ENCODE measurements at regions of chr5 and their contacts with region 1.

Region 1: GRCh38 chr5:154405078-154405792 is 40.6 kb upstream of the SAP30L start:
- DNase-seq: peak; percentile 82 to 83
- ATAC-seq: peak; percentile 94 to 99 (median 97)
- H3K4me3 ChIP-seq: peak overlapping the region in 9 of 10 donors; percentile 13 to 55 (median 49)
- H3K27ac ChIP-seq: peak overlapping the region in 4 of 10 donors; percentile 19 to 57 (median 24)
- H3K4me1 ChIP-seq: peaks cover 0 to 13% (median 9%) of the 10 kb centered on the region in 9 donors
- H3K27me3 ChIP-seq: no peaks in the 10 kb centered on the region
- CTCF ChIP-seq: peak; percentile 79 to 98 (median 91)

Region 2: GRCh38 chr5:153745778-153746395 is 659.3 kb before region 1 on chr5:
- intact Hi-C with region 1: no loop called
- DNase-seq: no peak
- ATAC-seq: peak in 5 of 8 donors; percentile 27 to 80 (median 52)
- H3K4me3 ChIP-seq: no peak overlapping the region
- H3K27ac ChIP-seq: peak overlapping the region in 1 of 10 donors; percentile 53
- H3K4me1 ChIP-seq: peaks cover 0 to 18% (median 0%) of the 10 kb centered on the region in 9 donors
- H3K27me3 ChIP-seq: no peaks in the 10 kb centered on the region
- CTCF ChIP-seq: no peak

Region 3: GRCh38 chr5:153974131-153974812 is 431.0 kb before region 1 on chr5:
- intact Hi-C with region 1: loop called (anchors 2 to 10 kb)
- DNase-seq: peak in 1 of 2 donors; percentile 36
- ATAC-seq: peak in 7 of 8 donors; percentile 31 to 76 (median 41)
- H3K4me3 ChIP-seq: no peak overlapping the region
- H3K27ac ChIP-seq: no peak overlapping the region
- H3K4me1 ChIP-seq: peaks cover 0 to 5% (median 0%) of the 10 kb centered on the region in 9 donors
- H3K27me3 ChIP-seq: no peaks in the 10 kb centered on the region
- CTCF ChIP-seq: peak; percentile 56 to 82 (median 77)

Region 4: GRCh38 chr5:154072414-154073171 is 332.6 kb before region 1 on chr5:
- intact Hi-C with region 1: loop called (anchors 1 to 5 kb)
- DNase-seq: peak; percentile 82 to 83
- ATAC-seq: peak; percentile 89 to 96 (median 93)
- H3K4me3 ChIP-seq: no peak overlapping the region
- H3K27ac ChIP-seq: peak overlapping the region in 4 of 10 donors; percentile 7 to 41 (median 11)
- H3K4me1 ChIP-seq: peaks cover under 1 to 35% (median 14%) of the 10 kb centered on the region in 9 donors
- H3K27me3 ChIP-seq: no peaks in the 10 kb centered on the region
- CTCF ChIP-seq: peak; percentile 79 to 97 (median 93)

Region 5: GRCh38 chr5:154077696-154078095 is 327.5 kb before region 1 on chr5:
- intact Hi-C with region 1: loop called (anchors 1 to 5 kb)
- DNase-seq: peak in 1 of 2 donors; percentile 26
- ATAC-seq: peak; percentile 46 to 94 (median 84)
- H3K4me3 ChIP-seq: no peak overlapping the region
- H3K27ac ChIP-seq: peak overlapping the region in 1 of 10 donors; percentile 2
- H3K4me1 ChIP-seq: peaks cover 7 to 38% (median 23%) of the 10 kb centered on the region in 9 donors
- H3K27me3 ChIP-seq: no peaks in the 10 kb centered on the region
- CTCF ChIP-seq: no peak

Region 6: DNA sequence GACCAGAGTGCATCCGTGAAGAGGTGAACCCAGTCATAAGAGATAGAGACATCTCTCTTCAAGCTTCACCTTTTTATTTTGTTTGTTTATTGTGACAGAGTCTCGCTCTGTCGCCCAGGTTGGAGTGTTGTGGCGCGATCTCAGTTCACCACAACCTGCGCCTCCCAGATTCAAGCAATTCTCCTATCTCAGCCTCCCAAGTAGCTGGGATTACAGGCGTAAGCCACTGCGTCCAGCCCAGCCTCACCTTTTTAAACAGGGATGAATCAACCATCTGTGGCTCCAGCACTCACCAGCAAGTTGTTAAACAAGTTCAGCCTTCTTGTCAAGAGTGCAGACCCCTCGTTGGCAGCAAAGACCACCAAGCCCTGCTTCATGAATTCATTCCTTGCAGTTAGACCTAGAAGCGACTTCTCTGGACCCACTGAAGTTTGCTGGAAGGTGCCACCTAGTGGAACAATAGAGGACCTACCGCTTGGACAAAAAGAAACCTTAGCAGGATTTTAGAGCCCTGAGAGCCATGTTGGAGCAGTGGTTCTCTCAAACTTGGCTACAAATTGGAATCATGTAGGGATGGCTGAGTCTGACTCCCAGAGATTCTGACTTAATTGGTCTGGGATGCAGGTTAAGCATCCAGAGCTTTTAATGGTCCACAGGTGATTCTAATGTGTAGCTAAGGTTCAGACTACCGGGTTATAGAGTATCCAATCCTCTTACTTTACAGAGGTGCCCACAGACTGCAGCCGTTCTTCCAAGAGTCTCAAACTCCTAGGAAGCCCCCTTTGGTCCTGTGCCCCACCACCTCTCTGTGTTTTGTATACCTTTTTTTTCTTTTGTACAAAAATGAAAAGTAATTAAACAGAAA is 225.2 kb before region 1 on chr5:
- intact Hi-C with region 1: loop called in 2 of 10 experiments (anchors 5 kb)
- DNase-seq: peak in 1 of 2 donors; percentile 37
- ATAC-seq: peak; percentile 74 to 89 (median 83)
- H3K4me3 ChIP-seq: no peak overlapping the region
- H3K27ac ChIP-seq: no peak overlapping the region
- H3K4me1 ChIP-seq: peaks cover 0 to 10% (median 0%) of the 10 kb centered on the region in 9 donors
- H3K27me3 ChIP-seq: no peaks in the 10 kb centered on the region
- CTCF ChIP-seq: peak; percentile 57 to 88 (median 80)

Region 7: GRCh38 chr5:154189819-154190594 is 215.2 kb before region 1 on chr5:
- intact Hi-C with region 1: loop called in 6 of 10 experiments (anchors 2 to 5 kb)
- DNase-seq: peak; percentile 88
- ATAC-seq: peak; percentile 85 to 94 (median 92)
- H3K4me3 ChIP-seq: peak overlapping the region; percentile 71 to 100 (median 95)
- H3K27ac ChIP-seq: peak overlapping the region; percentile 83 to 92 (median 90)
- H3K4me1 ChIP-seq: peaks cover 0 to 47% (median 38%) of the 10 kb centered on the region in 9 donors
- H3K27me3 ChIP-seq: peaks cover 0 to 12% (median 0%) of the 10 kb centered on the region in 7 donors
- CTCF ChIP-seq: peak in 7 of 9 donors; percentile 7 to 58 (median 53)

Region 8: GRCh38 chr5:154196955-154197652 is 208.1 kb before region 1 on chr5:
- intact Hi-C with region 1: loop called in 6 of 10 experiments (anchors 2 to 5 kb)
- DNase-seq: no peak
- ATAC-seq: peak in 5 of 8 donors; percentile 35 to 68 (median 55)
- H3K4me3 ChIP-seq: no peak overlapping the region
- H3K27ac ChIP-seq: peak overlapping the region in 1 of 10 donors; percentile 29
- H3K4me1 ChIP-seq: peaks cover 0 to 65% (median 45%) of the 10 kb centered on the region in 9 donors
- H3K27me3 ChIP-seq: no peaks in the 10 kb centered on the region
- CTCF ChIP-seq: peak in 8 of 9 donors; percentile 18 to 58 (median 42)